K562 (cell line): ENCODE measurements at regions of chr1 and their contacts with region 1.

Region 1: GRCh38 chr1:44819608-44820327 is 11.4 kb downstream of the BTBD19 start:
- DNase-seq: peak; percentile 90 to 97 (median 93)
- ATAC-seq: peak; percentile 96
- H3K4me3 ChIP-seq: peak overlapping the region; percentile 36
- H3K27ac ChIP-seq: peak overlapping the region; percentile 100
- H3K4me1 ChIP-seq: peaks cover 13 to 28% of the 10 kb centered on the region in 2 experiments
- H3K27me3 ChIP-seq: no peaks in the 10 kb centered on the region
- CTCF ChIP-seq: peak; percentile 26 to 49 (median 49); a peak in 4 of 6 replicates
- EP300 ChIP-seq: peak; percentile 73
- POLR2A ChIP-seq: peak; percentile 100
- RAD21 ChIP-seq: peak; percentile 41 to 53; a peak in 3 of 4 replicates

Region 2: GRCh38 chr1:44437107-44437716 is 382.6 kb before region 1 on chr1:
- CTCF ChIA-PET with region 1: no interaction called
- POLR2A ChIA-PET with region 1: no interaction called
- in situ Hi-C with region 1: no loop called
- intact Hi-C with region 1: no loop called
- DNase-seq: no peak
- ATAC-seq: no peak
- H3K4me3 ChIP-seq: no peak overlapping the region
- H3K27ac ChIP-seq: no peak overlapping the region
- H3K4me1 ChIP-seq: no peaks in the 10 kb centered on the region
- H3K27me3 ChIP-seq: peaks cover 2 to 13% of the 10 kb centered on the region in 2 experiments; a peak in 3 of 5 replicates
- CTCF ChIP-seq: no peak
- EP300 ChIP-seq: no peak
- POLR2A ChIP-seq: no peak
- RAD21 ChIP-seq: no peak

Region 3: GRCh38 chr1:44519035-44519676 is 300.6 kb before region 1 on chr1:
- CTCF ChIA-PET with region 1: no interaction called
- POLR2A ChIA-PET with region 1: no interaction called
- in situ Hi-C with region 1: no loop called
- intact Hi-C with region 1: no loop called
- DNase-seq: no peak
- ATAC-seq: no peak
- H3K4me3 ChIP-seq: no peak overlapping the region
- H3K27ac ChIP-seq: no peak overlapping the region
- H3K4me1 ChIP-seq: peaks cover 11 to 13% of the 10 kb centered on the region in 2 experiments; a peak in 4 of 5 replicates
- H3K27me3 ChIP-seq: peaks cover 10 to 16% of the 10 kb centered on the region in 2 experiments; a peak in 4 of 5 replicates
- CTCF ChIP-seq: no peak
- EP300 ChIP-seq: no peak
- POLR2A ChIP-seq: no peak
- RAD21 ChIP-seq: no peak

Region 4: GRCh38 chr1:44775078-44775929 is 44.5 kb before region 1 on chr1 and contains the start of gene RPS8:
- CTCF ChIA-PET with region 1: no interaction called
- POLR2A ChIA-PET with region 1: interaction called, 43 read pairs
- in situ Hi-C with region 1: no loop called
- intact Hi-C with region 1: loop called (anchors 5 kb)
- DNase-seq: peak; percentile 85 to 99 (median 89)
- ATAC-seq: peak; percentile 81
- H3K4me3 ChIP-seq: peak within 1 kb of the TSS; percentile 75
- H3K27ac ChIP-seq: peak within 1 kb of the TSS; percentile 98
- H3K4me1 ChIP-seq: peaks cover 13 to 22% of the 10 kb centered on the region in 2 experiments
- H3K27me3 ChIP-seq: no peaks in the 10 kb centered on the region
- CTCF ChIP-seq: 0 out of 6 replicates have a peak, but pooled peaks of 1 of the 3 experiments have one; percentile 2
- EP300 ChIP-seq: peak; percentile 44; the same call in 1 of the 2 replicates
- POLR2A ChIP-seq: peak; percentile 100
- RAD21 ChIP-seq: no peak
- polyA plus RNA-seq, gene RPS8: 2,431 to 2,562 TPM

Region 5: DNA sequence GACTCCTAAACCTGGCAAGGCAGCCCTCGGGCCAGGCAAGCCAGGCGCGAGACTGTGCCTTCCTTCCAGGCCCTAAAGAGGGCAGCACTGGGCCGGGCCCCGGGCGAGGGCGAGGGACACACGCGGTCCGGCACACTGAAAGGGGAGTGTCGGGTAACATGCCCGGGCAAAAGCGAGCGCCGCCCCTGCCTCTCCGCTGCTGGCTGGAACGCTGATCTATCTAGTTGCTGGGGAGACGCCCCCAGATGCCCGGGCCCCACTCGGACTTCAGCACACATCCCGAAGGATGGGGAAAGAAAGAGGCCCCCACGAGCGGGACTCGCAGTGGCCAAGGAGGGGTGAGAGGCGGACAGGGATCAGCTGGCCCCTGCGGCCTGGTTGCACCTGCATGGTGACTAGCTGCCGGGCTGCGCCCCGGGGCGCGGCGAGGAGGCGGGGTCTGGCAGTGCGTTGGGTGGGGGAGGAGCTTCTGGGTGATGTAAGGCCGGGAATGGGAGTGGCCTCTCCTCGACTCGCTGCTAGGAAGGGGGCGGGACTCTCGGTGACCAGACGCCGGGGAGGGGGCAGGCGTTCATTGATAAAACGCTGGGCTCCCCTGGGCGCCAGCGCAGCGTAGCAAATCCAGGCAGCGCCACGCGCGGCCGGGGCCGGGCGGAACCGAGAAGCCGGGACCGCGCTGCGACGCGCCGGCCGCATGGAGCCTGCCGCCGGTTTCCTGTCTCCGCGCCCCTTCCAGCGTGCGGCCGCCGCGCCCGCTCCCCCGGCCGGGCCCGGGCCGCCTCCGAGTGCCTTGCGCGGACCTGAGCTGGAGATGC is 19.8 kb before region 1 on chr1 and contains the start of gene PLK3:
- CTCF ChIA-PET with region 1: interaction called, 3 read pairs
- POLR2A ChIA-PET with region 1: interaction called, 594 read pairs
- in situ Hi-C with region 1: no loop called
- intact Hi-C with region 1: loop called (anchors 2 kb)
- DNase-seq: peak; percentile 92 to 99 (median 96)
- ATAC-seq: peak; percentile 93
- H3K4me3 ChIP-seq: peak within 1 kb of the TSS; percentile 77
- H3K27ac ChIP-seq: peak within 1 kb of the TSS; percentile 69
- H3K4me1 ChIP-seq: peaks cover 23 to 53% of the 10 kb centered on the region in 2 experiments
- H3K27me3 ChIP-seq: no peaks in the 10 kb centered on the region; a peak in 1 of 5 replicates
- CTCF ChIP-seq: peak; percentile 94 to 96 (median 95)
- EP300 ChIP-seq: no peak; the same call in 1 of the 2 replicates
- POLR2A ChIP-seq: peak; percentile 91
- RAD21 ChIP-seq: peak; percentile 91 to 96
- polyA plus RNA-seq, gene PLK3: 0.52 to 1.9 TPM

Region 6: GRCh38 chr1:44848456-44849181 is 28.9 kb after region 1 on chr1:
- CTCF ChIA-PET with region 1: no interaction called
- POLR2A ChIA-PET with region 1: interaction called, 16 read pairs
- in situ Hi-C with region 1: no loop called
- intact Hi-C with region 1: no loop called
- DNase-seq: no peak
- ATAC-seq: no peak
- H3K4me3 ChIP-seq: no peak overlapping the region
- H3K27ac ChIP-seq: no peak overlapping the region
- H3K4me1 ChIP-seq: peaks cover 0 to 1% of the 10 kb centered on the region in 2 experiments; a peak in 2 of 5 replicates
- H3K27me3 ChIP-seq: no peaks in the 10 kb centered on the region
- CTCF ChIP-seq: no peak
- EP300 ChIP-seq: no peak
- POLR2A ChIP-seq: no peak
- RAD21 ChIP-seq: no peak

Region 7: GRCh38 chr1:45001011-45001481 is 181.3 kb after region 1 on chr1:
- CTCF ChIA-PET with region 1: no interaction called
- POLR2A ChIA-PET with region 1: interaction called, 13 read pairs
- in situ Hi-C with region 1: no loop called
- intact Hi-C with region 1: no loop called
- DNase-seq: peak in 1 of 4 experiments; percentile 26
- ATAC-seq: peak; percentile 66
- H3K4me3 ChIP-seq: no peak overlapping the region
- H3K27ac ChIP-seq: 0 out of 3 replicates have a peak overlapping the region, but pooled peaks have one; percentile 1
- H3K4me1 ChIP-seq: no peaks in the 10 kb centered on the region; a peak in 1 of 5 replicates
- H3K27me3 ChIP-seq: no peaks in the 10 kb centered on the region
- CTCF ChIP-seq: no peak
- EP300 ChIP-seq: no peak
- POLR2A ChIP-seq: no peak
- RAD21 ChIP-seq: no peak

Region 8: DNA sequence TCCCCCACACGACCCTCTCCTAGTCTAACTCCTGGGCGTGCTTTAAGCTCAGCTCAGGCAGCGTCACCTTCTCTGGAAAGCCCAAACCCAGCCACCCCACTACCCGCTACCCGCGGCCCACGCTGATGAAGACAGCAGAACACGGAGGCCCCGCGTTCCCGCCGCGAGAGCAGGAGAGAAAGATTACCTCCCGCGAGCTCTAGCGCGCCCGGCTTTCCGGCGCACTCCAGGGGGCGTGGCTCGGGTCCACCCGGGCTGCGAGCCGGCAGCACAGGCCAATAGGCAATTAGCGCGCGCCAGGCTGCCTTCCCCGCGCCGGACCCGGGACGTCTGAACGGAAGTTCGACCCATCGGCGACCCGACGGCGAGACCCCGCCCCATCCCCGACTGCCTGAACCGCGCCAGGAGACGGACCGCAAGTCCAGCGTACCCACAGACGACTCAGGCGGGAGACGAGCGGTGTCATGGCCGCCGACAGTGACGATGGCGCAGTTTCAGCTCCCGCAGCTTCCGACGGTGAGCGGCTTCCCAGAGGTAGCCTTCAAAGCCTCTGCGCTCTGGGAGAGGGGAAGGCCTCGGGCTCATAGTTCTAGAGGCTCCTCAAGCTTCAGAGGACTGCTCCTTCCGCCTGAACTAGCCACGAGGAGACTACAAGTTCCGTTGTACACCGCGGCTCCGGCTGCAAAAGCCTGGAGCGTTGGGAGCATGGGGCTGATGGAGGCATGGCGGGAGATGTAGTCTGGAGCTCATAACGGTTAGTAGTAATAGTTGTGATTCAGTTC is 520.2 kb after region 1 on chr1 and contains the starts of genes MUTYH and TOE1:
- CTCF ChIA-PET with region 1: no interaction called
- POLR2A ChIA-PET with region 1: interaction called, 14 read pairs
- in situ Hi-C with region 1: no loop called
- intact Hi-C with region 1: no loop called
- DNase-seq: peak; percentile 98 to 99 (median 98)
- ATAC-seq: peak; percentile 95
- H3K4me3 ChIP-seq: peak within 1 kb of the TSS; percentile 66
- H3K27ac ChIP-seq: peak within 1 kb of the TSS; percentile 94
- H3K4me1 ChIP-seq: peaks cover 6 to 18% of the 10 kb centered on the region in 2 experiments; a peak in 4 of 5 replicates
- H3K27me3 ChIP-seq: no peaks in the 10 kb centered on the region
- CTCF ChIP-seq: no peak
- EP300 ChIP-seq: no peak; the same call in 1 of the 2 replicates
- POLR2A ChIP-seq: peak; percentile 99
- RAD21 ChIP-seq: no peak; a peak in 1 of 4 replicates
- polyA plus RNA-seq, gene MUTYH: 3.4 to 6.2 TPM
- polyA plus RNA-seq, gene TOE1: 59.8 to 85.7 TPM